MCF 10A (cell line): ENCODE measurements at regions of chr6 and their contacts with region 1.

Region 1: GRCh38 chr6:29752451-29753308 is 29.4 kb downstream of the HLA-F start:
- DNase-seq: peak; percentile 92
- H3K4me3 Mint-ChIP-seq: peak overlapping the region; percentile 89
- H3K27ac Mint-ChIP-seq: peak overlapping the region; percentile 85
- H3K4me1 Mint-ChIP-seq: peaks cover 32% of the 10 kb centered on the region
- H3K27me3 Mint-ChIP-seq: no peaks in the 10 kb centered on the region
- CTCF ChIP-seq: peak; percentile 94

Region 2: GRCh38 chr6:29602564-29603361 is 149.9 kb before region 1 on chr6:
- CTCF ChIA-PET with region 1: no interaction called
- POLR2A ChIA-PET with region 1: no interaction called
- intact Hi-C with region 1: no loop called
- DNase-seq: peak; percentile 14
- H3K4me3 Mint-ChIP-seq: no peak overlapping the region
- H3K27ac Mint-ChIP-seq: no peak overlapping the region
- H3K4me1 Mint-ChIP-seq: no peaks in the 10 kb centered on the region
- H3K27me3 Mint-ChIP-seq: no peaks in the 10 kb centered on the region
- CTCF ChIP-seq: no peak

Region 3: DNA sequence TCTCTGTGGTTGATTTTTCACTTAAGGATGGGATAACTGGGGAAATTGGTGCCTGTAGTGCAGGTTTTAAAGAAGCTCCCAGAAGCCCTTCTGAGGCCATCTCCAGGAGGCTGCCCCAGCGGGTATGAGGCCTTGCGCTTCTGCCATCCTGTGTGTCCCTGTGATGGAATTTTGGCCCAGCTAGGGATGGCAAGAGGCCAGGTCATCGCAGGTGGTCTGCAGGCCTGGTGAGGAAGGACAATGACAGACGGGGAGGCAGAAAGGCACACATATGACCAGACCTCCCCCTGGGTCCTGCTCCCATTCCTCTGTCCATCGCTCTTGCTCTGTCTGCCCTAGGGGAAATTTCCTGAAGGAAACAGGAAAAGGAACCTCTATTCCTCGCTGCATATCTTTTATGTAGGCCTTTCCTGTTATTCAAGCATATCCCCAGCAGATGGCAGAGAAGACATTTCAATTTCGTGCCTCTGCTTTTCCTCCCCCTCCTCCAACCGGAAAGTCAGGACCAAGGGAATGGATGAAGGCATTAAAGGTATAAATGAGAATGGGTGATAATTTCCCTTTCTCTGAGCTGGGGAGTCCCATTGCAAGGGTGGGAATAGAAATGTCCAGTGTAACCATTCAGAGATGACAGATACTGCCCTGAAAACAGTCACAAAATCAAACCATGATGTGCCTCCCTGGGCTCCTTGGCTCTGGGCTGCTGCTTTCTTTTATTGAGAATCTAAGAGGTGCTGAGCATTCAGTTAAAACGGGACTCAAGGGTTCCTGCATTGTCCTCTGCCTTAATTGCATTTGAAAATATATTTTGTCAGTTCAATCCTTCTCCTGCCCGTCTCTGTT is 47.1 kb before region 1 on chr6:
- CTCF ChIA-PET with region 1: interaction called, 6 read pairs
- POLR2A ChIA-PET with region 1: no interaction called
- intact Hi-C with region 1: loop called (anchors 5 kb)
- DNase-seq: peak; percentile 72
- H3K4me3 Mint-ChIP-seq: no peak overlapping the region
- H3K27ac Mint-ChIP-seq: no peak overlapping the region
- H3K4me1 Mint-ChIP-seq: peaks cover 6% of the 10 kb centered on the region
- H3K27me3 Mint-ChIP-seq: peaks cover 15% of the 10 kb centered on the region
- CTCF ChIP-seq: peak; percentile 56

Region 4: DNA sequence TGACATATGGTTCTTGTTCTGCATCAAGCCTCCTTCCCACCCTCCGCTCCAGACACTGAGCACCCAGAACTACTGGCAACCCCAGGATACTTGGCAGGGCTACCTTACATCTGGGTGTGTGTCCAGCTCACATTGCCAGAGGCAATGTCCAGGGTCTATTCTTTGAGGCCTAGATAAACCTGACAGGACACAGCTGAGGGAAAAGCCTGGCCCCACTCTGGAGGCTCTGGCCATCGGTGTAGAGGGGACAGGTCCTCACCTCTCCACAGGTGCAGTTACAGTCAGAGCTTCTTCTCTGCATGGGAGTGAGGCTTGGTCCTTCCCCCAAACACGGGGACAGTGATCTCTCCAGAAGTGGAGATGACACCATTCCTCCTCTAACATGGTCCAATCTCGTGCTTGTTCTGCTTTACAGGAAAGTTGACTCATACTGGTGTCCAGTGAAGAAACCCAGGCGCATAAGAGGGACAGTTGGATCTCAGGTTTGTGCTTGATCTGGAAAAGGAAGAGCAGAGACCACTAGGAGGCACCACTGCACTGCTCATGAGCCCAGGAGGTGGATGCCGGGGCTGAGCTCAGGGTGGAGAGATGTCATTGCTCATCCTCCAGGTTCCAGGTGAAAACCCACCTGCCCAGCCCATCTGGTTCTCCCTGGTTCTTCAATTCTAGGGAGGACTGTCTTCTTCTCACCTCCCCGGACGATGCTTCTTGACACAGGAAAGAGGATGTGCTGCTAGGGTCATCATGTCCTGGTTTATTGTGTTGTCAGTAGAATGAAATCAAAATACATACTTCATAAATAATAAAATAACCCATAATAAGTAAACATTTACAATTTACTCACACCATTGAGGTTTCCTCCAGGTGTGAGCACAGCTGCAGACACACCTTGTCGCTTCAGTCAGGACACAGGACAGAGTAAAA is 14.7 kb before region 1 on chr6:
- CTCF ChIA-PET with region 1: interaction called, 16 read pairs
- POLR2A ChIA-PET with region 1: interaction called, 6 read pairs
- intact Hi-C with region 1: no loop called
- DNase-seq: peak; percentile 84
- H3K4me3 Mint-ChIP-seq: no peak overlapping the region
- H3K27ac Mint-ChIP-seq: no peak overlapping the region
- H3K4me1 Mint-ChIP-seq: peaks cover 18% of the 10 kb centered on the region
- H3K27me3 Mint-ChIP-seq: no peaks in the 10 kb centered on the region
- CTCF ChIP-seq: peak; percentile 84

Region 5: GRCh38 chr6:29763491-29764289 is 11.0 kb after region 1 on chr6:
- CTCF ChIA-PET with region 1: interaction called, 13 read pairs
- POLR2A ChIA-PET with region 1: interaction called, 19 read pairs
- intact Hi-C with region 1: loop called (anchors 1 kb)
- DNase-seq: peak; percentile 96
- H3K4me3 Mint-ChIP-seq: peak overlapping the region; percentile 19
- H3K27ac Mint-ChIP-seq: peak overlapping the region; percentile 66
- H3K4me1 Mint-ChIP-seq: peaks cover 55% of the 10 kb centered on the region
- H3K27me3 Mint-ChIP-seq: no peaks in the 10 kb centered on the region
- CTCF ChIP-seq: no peak

Region 6: DNA sequence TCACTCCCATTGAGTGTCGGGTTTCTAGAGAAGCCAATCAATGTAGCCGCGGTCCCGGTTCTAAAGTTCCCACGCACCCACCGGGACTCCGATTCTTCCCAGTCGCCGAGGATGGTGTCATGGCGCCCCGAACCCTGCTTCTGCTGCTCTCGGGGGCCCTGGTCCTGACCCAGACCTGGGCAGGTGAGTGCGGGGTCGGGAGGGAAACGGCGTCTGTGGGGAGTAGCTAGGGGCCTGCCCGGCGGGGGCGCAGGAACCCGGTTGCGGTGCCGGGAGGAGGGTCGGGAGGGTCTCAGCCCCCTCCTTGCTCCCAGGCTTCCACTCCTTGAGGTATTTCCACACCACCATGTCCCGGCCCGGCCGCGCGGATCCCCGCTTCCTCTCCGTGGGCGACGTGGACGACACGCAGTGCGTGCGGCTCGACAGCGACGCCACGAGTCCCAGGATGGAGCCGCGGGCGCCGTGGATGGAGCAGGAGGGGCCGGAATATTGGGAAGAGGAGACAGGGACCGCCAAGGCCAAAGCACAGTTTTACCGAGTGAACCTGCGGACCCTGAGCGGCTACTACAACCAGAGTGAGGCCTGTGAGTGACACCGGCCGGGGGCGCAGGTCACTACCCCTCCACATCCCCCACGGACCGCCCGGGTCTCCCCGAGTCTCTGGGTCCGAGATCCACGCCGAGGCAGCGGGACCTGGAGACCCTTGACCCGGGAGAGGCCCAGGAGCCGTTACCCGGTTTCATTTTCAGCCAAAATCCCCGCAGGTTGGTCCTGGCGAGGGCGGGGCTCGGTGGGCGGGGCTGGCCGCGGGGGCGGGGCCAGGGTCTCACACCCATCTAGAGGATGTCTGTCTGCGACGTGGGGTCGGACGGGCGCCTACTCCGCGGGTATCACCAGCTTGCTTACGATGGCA is 39.7 kb after region 1 on chr6:
- CTCF ChIA-PET with region 1: interaction called, 4 read pairs
- POLR2A ChIA-PET with region 1: interaction called, 10 read pairs
- intact Hi-C with region 1: loop called (anchors 2 kb)
- DNase-seq: peak; percentile 30
- H3K4me3 Mint-ChIP-seq: peak overlapping the region; percentile 67
- H3K27ac Mint-ChIP-seq: peak overlapping the region; percentile 96
- H3K4me1 Mint-ChIP-seq: peaks cover 25% of the 10 kb centered on the region
- H3K27me3 Mint-ChIP-seq: no peaks in the 10 kb centered on the region
- CTCF ChIP-seq: peak; percentile 14

Region 7: GRCh38 chr6:29834564-29835436 is 82.1 kb after region 1 on chr6:
- CTCF ChIA-PET with region 1: interaction called, 20 read pairs
- POLR2A ChIA-PET with region 1: interaction called, 3 read pairs
- intact Hi-C with region 1: no loop called
- DNase-seq: peak; percentile 42
- H3K4me3 Mint-ChIP-seq: no peak overlapping the region
- H3K27ac Mint-ChIP-seq: no peak overlapping the region
- H3K4me1 Mint-ChIP-seq: peaks cover 6% of the 10 kb centered on the region
- H3K27me3 Mint-ChIP-seq: peaks cover 45% of the 10 kb centered on the region
- CTCF ChIP-seq: peak; percentile 91

Region 8: DNA sequence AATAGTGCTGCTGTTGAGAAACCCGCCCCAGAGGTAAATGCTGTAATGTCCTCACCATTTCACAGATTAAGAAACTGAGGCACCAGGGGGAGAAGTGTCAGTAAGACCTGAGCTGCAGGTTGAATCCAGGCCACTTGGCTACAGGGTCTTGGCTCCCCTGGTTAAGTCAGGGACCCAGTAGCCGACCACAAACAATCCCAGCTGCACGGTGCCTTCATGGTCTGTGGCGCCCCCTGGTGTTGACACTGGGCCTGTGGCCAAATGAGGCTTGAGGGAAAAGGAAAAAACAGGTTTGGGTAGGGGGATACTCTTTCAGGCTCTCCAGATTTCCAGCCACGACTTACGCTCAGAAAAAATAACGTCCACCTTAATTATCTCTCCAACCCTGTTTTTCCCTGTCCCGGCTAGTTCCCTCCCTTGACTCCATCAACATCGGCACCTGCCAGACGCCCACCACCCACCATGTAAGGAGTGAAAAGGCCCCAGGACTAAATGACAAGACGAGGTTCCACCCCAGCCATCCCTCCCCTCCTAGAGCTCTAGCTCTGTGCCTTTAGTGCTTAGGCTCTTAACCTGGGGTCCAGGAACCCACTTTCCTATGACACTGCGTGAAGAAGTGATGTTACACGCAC is 260.7 kb after region 1 on chr6:
- CTCF ChIA-PET with region 1: interaction called, 3 read pairs
- POLR2A ChIA-PET with region 1: no interaction called
- intact Hi-C with region 1: loop called (anchors 2 kb)
- DNase-seq: peak; percentile 19
- H3K4me3 Mint-ChIP-seq: no peak overlapping the region
- H3K27ac Mint-ChIP-seq: no peak overlapping the region
- H3K4me1 Mint-ChIP-seq: no peaks in the 10 kb centered on the region
- H3K27me3 Mint-ChIP-seq: no peaks in the 10 kb centered on the region
- CTCF ChIP-seq: peak; percentile 71